PC-3 (cell line): ENCODE measurements at regions of chr1 and their contacts with region 1.

Region 1: DNA sequence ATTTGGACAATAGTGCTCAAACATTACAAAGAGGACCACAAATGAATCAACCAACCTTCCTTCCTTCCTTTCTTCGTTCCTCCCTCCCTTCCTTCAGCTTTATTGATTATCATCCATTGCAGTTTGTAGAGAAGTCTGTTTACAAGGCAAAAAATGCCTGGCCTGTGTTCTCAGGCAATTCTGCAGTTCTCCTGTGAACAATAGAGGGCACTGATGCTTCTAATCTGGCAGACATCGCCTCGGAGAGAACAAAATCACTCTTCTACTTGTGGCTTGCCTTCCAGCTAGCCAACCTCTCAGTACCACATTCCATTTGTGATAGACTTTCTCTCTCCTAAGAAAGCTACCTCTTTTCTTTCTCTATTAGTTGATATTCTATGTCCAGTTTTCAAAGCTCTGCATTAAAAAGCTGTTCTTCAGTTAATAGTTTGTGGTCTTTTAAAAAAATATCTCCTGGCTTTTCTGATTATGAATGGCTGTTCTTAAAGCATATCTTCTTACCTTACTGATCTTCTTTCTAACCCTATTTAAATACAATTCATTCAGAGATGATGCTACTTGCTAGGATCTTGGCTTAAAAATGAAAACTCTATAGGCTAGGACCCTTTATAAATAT is 26.9 kb upstream of the ESRRG start:
- DNase-seq: peak; percentile 85
- ATAC-seq: peak; percentile 98
- H3K4me3 ChIP-seq: no peak overlapping the region
- H3K27ac ChIP-seq: no peak overlapping the region
- H3K4me1 ChIP-seq: no peaks in the 10 kb centered on the region
- H3K27me3 ChIP-seq: peaks cover 22% of the 10 kb centered on the region; the same call in 1 of the 2 replicates
- CTCF ChIP-seq: peak; percentile 95

Region 2: GRCh38 chr1:216702170-216702569 is 48.0 kb before region 1 on chr1:
- CTCF ChIA-PET with region 1: no interaction called
- POLR2A ChIA-PET with region 1: no interaction called
- intact Hi-C with region 1: no loop called
- DNase-seq: no peak
- ATAC-seq: no peak
- H3K4me3 ChIP-seq: no peak overlapping the region
- H3K27ac ChIP-seq: no peak overlapping the region
- H3K4me1 ChIP-seq: no peaks in the 10 kb centered on the region
- H3K27me3 ChIP-seq: peaks cover 11% of the 10 kb centered on the region
- CTCF ChIP-seq: no peak

Region 3: GRCh38 chr1:216894494-216894893 is 144.4 kb after region 1 on chr1:
- CTCF ChIA-PET with region 1: no interaction called
- POLR2A ChIA-PET with region 1: no interaction called
- intact Hi-C with region 1: no loop called
- DNase-seq: no peak
- ATAC-seq: no peak
- H3K4me3 ChIP-seq: no peak overlapping the region
- H3K27ac ChIP-seq: no peak overlapping the region
- H3K4me1 ChIP-seq: no peaks in the 10 kb centered on the region
- H3K27me3 ChIP-seq: peaks cover 10% of the 10 kb centered on the region; the same call in 1 of the 2 replicates
- CTCF ChIP-seq: no peak

Region 4: GRCh38 chr1:216944864-216945510 is 194.9 kb after region 1 on chr1:
- CTCF ChIA-PET with region 1: no interaction called
- POLR2A ChIA-PET with region 1: no interaction called
- intact Hi-C with region 1: loop called (anchors 2 kb)
- DNase-seq: no peak
- ATAC-seq: no peak
- H3K4me3 ChIP-seq: no peak overlapping the region
- H3K27ac ChIP-seq: no peak overlapping the region
- H3K4me1 ChIP-seq: no peaks in the 10 kb centered on the region
- H3K27me3 ChIP-seq: no peaks in the 10 kb centered on the region
- CTCF ChIP-seq: peak; percentile 48; the same call in 1 of the 2 replicates

Region 5: GRCh38 chr1:216997069-216997468 is 246.9 kb after region 1 on chr1:
- CTCF ChIA-PET with region 1: no interaction called
- POLR2A ChIA-PET with region 1: no interaction called
- intact Hi-C with region 1: no loop called
- DNase-seq: no peak
- ATAC-seq: no peak
- H3K4me3 ChIP-seq: no peak overlapping the region
- H3K27ac ChIP-seq: no peak overlapping the region
- H3K4me1 ChIP-seq: no peaks in the 10 kb centered on the region
- H3K27me3 ChIP-seq: no peaks in the 10 kb centered on the region
- CTCF ChIP-seq: no peak

Region 6: DNA sequence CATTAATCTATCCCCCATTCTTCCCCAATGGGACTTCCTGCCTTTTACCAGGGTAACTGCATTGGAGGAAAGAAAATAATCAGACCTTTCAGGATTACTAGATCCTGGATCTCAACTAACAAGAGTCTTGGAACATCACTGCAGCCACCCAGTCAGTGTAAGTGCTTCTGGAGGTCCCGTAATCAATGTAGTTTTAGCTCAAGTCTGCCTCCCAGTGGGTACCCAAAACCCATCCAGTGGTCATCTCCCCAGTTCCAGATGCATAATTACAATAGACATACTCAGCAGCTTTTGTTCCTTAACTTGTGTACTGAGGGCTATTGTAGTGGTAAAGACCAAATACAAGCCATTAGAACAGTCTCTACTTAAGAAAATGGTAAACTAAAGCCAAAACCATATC is 561.6 kb after region 1 on chr1:
- CTCF ChIA-PET with region 1: no interaction called
- POLR2A ChIA-PET with region 1: no interaction called
- intact Hi-C with region 1: loop called (anchors 5 kb)
- DNase-seq: peak; percentile 70
- ATAC-seq: peak; percentile 40; the same call in 1 of the 2 replicates
- H3K4me3 ChIP-seq: no peak overlapping the region
- H3K27ac ChIP-seq: no peak overlapping the region
- H3K4me1 ChIP-seq: peaks cover 9% of the 10 kb centered on the region
- H3K27me3 ChIP-seq: no peaks in the 10 kb centered on the region
- CTCF ChIP-seq: peak; percentile 75

Region 7: GRCh38 chr1:217393896-217394295 is 643.8 kb after region 1 on chr1:
- CTCF ChIA-PET with region 1: no interaction called
- POLR2A ChIA-PET with region 1: no interaction called
- intact Hi-C with region 1: loop called (anchors 10 kb)
- DNase-seq: peak; percentile 52
- ATAC-seq: peak; percentile 86
- H3K4me3 ChIP-seq: no peak overlapping the region
- H3K27ac ChIP-seq: no peak overlapping the region
- H3K4me1 ChIP-seq: no peaks in the 10 kb centered on the region
- H3K27me3 ChIP-seq: no peaks in the 10 kb centered on the region
- CTCF ChIP-seq: peak; percentile 56

Region 8: GRCh38 chr1:217579582-217579981 is 829.5 kb after region 1 on chr1:
- CTCF ChIA-PET with region 1: no interaction called
- POLR2A ChIA-PET with region 1: no interaction called
- intact Hi-C with region 1: loop called (anchors 5 kb)
- DNase-seq: peak; percentile 25
- ATAC-seq: peak; percentile 61
- H3K4me3 ChIP-seq: no peak overlapping the region
- H3K27ac ChIP-seq: no peak overlapping the region
- H3K4me1 ChIP-seq: peaks cover 7% of the 10 kb centered on the region
- H3K27me3 ChIP-seq: no peaks in the 10 kb centered on the region
- CTCF ChIP-seq: peak; percentile 50

Region 9: DNA sequence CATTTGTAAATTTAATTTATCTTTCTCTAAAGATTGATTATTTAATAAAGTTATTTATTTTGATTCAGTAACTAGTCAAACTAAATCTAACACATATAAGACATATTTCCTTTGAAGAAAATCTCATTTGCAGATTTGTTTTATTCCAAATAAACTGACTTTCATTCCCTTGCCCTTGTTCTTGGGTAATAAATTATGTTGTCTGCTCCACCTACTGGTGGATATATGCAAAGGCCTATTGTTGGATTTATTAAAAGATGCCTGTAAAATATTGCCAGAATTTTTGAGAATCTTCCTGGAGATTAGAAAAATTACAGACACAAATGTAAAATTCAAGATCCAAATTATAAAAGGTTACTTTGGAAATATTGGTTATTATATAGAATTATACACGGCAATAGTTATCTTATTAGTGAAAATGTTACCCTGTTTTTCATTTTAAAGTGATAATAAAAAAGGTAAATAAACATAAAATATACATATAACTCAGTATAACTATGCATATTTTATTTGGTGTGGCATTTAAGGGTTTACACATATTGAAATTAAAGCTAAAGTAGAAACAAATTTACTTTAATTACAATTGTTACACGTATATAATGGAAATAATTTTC is 997.1 kb after region 1 on chr1:
- CTCF ChIA-PET with region 1: no interaction called
- POLR2A ChIA-PET with region 1: no interaction called
- intact Hi-C with region 1: loop called (anchors 5 kb)
- DNase-seq: peak; percentile 75
- ATAC-seq: no peak; the same call in 1 of the 2 replicates
- H3K4me3 ChIP-seq: no peak overlapping the region
- H3K27ac ChIP-seq: no peak overlapping the region
- H3K4me1 ChIP-seq: no peaks in the 10 kb centered on the region
- H3K27me3 ChIP-seq: no peaks in the 10 kb centered on the region
- CTCF ChIP-seq: peak; percentile 89